Heart right ventricle (tissue), 16 donors: ENCODE measurements at regions of chr15 and their contacts with region 1.

Region 1: GRCh38 chr15:84981054-84981710 is 474 bp upstream of the PDE8A start:
- DNase-seq: peak; percentile 94 to 97
- ATAC-seq: peak; percentile 88 to 96 (median 92)
- H3K4me3 ChIP-seq: peak overlapping the region; percentile 62 to 96 (median 85)
- H3K27ac ChIP-seq: peak overlapping the region; percentile 91 to 98 (median 96)
- H3K4me1 ChIP-seq: peaks cover 6 to 54% (median 39%) of the 10 kb centered on the region in 9 donors
- H3K27me3 ChIP-seq: no peaks in the 10 kb centered on the region
- CTCF ChIP-seq: peak in 5 of 9 donors; percentile 30 to 48 (median 42)

Region 2: DNA sequence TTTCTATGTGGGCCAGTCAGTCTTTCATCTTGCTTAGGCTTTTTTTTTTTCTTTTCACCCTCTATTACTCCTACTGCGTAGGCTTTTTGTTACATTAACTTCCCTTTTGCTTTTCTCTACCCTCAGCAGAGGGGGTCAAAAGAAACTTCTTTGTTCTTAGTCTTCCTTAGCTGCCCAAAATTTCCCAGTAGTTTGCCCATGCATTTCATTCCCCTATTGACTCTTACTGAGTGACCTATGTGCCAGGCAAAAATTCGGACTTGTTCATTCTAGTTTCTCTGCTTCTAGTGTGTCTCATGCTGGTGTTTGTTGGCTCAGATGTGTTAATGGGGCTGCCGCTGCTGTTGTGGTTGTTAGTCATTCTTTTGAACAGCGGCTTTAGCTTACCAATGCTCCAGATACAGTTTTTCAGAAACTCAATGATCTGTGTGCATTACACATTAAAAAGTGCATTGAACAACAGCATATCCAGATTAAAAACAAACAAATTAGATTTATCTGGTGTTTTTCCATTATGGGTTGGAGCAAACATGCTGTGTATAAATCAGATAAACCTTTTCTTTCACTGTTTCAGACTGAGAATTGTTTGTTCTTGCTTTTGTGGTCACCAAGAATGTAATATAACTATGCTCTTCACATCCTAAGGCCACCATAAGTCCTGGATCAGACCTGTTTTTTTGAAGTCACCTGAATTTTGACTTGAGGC is 43.5 kb after region 1 on chr15:
- intact Hi-C with region 1: loop called in 2 of 10 experiments (anchors 5 kb)
- DNase-seq: no peak
- ATAC-seq: no peak
- H3K4me3 ChIP-seq: no peak overlapping the region
- H3K27ac ChIP-seq: peak overlapping the region in 2 of 10 donors; percentile 0 to 61
- H3K4me1 ChIP-seq: peaks cover 10 to 75% (median 58%) of the 10 kb centered on the region in 9 donors
- H3K27me3 ChIP-seq: no peaks in the 10 kb centered on the region
- CTCF ChIP-seq: no peak

Region 3: DNA sequence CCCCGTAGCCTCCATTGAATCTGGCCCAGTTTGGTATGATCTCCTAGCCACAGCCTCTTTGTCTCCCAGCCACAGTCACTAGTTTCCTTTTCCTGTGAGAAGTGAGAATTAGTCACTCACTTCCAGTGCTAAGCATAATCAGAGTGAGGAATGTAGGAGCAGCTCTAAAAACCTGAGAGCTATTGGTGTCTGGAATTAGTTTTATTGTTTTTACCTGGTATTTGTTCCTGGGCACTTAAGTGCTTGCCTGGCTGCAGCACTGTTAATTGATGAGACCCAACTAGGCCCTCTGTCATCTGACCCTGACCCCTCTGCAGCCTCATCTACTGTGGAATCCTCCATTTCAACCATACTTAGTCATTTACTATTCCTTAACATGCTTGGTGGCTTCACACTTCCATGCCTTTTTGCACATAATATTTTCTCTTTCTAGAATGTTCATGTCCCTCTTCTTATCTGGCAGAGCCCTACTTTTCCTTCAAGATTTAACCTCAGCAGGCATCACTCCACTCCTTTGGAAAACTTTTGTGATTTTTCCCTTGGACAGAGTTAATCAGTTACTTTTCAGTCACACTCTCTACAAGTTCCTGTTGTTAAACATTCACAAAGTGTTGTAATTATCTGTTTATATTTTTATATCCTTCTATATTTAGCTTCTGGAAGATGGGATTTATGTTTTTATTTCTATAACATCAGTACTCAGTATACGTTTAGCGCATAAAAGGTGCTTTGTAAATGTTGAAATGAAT is 49.3 kb after region 1 on chr15:
- intact Hi-C with region 1: loop called in 4 of 10 experiments (anchors 5 to 10 kb)
- DNase-seq: no peak
- ATAC-seq: peak in 4 of 8 donors; percentile 32 to 71 (median 56)
- H3K4me3 ChIP-seq: no peak overlapping the region
- H3K27ac ChIP-seq: peak overlapping the region in 5 of 10 donors; percentile 5 to 67 (median 51)
- H3K4me1 ChIP-seq: peaks cover 14 to 88% (median 79%) of the 10 kb centered on the region in 9 donors
- H3K27me3 ChIP-seq: no peaks in the 10 kb centered on the region
- CTCF ChIP-seq: no peak

Region 4: GRCh38 chr15:85044251-85044853 is 63.2 kb after region 1 on chr15:
- intact Hi-C with region 1: loop called in 6 of 10 experiments (anchors 5 to 10 kb)
- DNase-seq: peak in 1 of 2 donors; percentile 78
- ATAC-seq: peak; percentile 67 to 80 (median 72)
- H3K4me3 ChIP-seq: no peak overlapping the region
- H3K27ac ChIP-seq: peak overlapping the region in 4 of 10 donors; percentile 73 to 88 (median 78)
- H3K4me1 ChIP-seq: peaks cover 0 to 63% (median 39%) of the 10 kb centered on the region in 9 donors
- H3K27me3 ChIP-seq: no peaks in the 10 kb centered on the region
- CTCF ChIP-seq: peak; percentile 49 to 80 (median 70)